BJ (cell line): ENCODE measurements at regions of chr18 and their contacts with region 1.

Region 1: DNA sequence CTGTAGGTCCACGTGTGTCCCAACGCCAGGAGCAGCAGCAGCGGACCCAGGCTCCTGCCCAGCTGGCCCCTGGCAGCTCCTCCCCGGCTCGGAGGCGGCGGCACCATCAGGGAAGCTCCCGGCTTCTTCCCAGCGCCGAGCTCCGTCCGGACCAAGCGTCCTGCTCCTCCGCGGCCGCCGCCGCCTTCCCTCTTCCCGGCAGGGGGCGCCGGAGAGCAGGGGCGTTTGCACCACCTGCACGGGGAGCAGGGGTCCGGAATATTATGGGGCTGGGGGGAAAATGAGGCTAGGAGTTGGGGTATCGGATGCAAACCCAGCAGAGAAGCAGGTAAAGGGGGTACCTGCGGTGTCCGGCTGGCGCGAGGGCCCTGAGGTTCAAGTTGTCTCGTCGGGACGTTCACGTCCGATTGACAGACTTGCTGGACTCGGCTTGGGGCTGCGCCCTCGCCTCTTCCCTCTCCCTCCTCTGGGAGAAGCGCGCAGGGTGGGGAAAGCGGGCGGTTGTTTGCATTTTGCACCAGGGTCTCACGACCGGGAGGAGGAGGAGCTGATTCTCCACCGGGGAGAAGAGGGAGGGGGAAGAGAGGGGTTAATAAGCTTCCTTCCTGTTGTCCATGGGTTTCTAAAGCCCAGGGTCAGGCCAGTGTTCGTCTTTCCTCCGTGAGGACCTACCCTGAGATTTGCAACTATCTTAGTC is at the start of gene CCBE1:
- DNase-seq: no peak
- H3K4me3 ChIP-seq: peak within 1 kb of the TSS; percentile 89
- H3K27me3 ChIP-seq: no peaks in the 10 kb centered on the region
- CTCF ChIP-seq: peak; percentile 99
- polyA plus RNA-seq, gene CCBE1: 35.4 and 51.2 TPM in 2 replicates

Region 2: DNA sequence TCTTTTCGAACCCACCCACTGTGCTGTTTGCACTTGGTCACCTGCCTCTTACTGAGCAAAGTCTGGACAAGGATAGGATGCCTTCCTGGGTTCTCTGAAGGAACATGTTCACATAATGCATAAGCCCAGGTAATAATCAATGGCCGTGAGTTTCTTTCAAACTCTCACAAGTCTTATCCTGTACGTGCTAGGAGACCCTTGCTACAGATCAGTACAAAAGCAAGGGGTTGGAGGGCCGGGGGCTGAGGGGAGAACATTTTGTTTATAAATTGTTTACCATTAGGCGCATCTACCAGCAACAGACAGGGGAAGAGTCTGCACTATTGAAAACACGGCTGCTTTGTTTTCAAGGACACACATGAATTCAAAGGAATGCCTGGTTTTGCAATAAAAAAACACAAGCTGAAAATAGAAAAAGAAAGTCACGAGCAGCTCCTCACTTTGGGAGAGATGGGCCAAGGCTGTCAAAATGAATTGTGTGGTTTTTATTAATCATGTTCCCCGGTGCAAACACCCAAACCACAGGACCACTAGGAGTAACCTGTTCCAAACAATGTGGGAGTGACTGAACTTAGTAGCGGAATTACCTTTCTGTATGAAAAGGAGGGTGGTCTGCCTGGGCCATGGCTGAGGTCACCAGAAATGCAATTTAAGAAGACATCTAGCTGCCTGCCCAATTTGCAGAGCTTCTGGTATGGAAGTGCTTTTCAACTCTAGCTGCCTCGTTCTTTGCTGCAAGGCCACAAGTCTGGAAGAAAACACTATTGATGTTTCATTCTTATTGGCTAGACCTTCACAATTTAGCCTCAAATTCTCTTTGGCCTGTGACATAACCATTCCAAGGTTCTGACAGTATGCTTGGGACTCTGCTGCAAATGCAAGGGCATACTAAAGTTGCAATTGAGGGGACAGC is 73.7 kb before region 1 on chr18:
- CTCF ChIA-PET with region 1: interaction called, 12 read pairs
- POLR2A ChIA-PET with region 1: no interaction called
- DNase-seq: peak; percentile 28
- H3K4me3 ChIP-seq: no peak overlapping the region
- H3K27me3 ChIP-seq: no peaks in the 10 kb centered on the region
- CTCF ChIP-seq: no peak

Region 3: GRCh38 chr18:59672235-59672711 is 25.1 kb before region 1 on chr18:
- CTCF ChIA-PET with region 1: interaction called, 13 read pairs
- POLR2A ChIA-PET with region 1: no interaction called
- DNase-seq: no peak
- H3K4me3 ChIP-seq: no peak overlapping the region
- H3K27me3 ChIP-seq: no peaks in the 10 kb centered on the region
- CTCF ChIP-seq: no peak

Region 4: GRCh38 chr18:59744271-59744721 is 46.9 kb after region 1 on chr18:
- CTCF ChIA-PET with region 1: interaction called, 17 read pairs
- POLR2A ChIA-PET with region 1: no interaction called
- DNase-seq: peak; percentile 97
- H3K4me3 ChIP-seq: no peak overlapping the region
- H3K27me3 ChIP-seq: no peaks in the 10 kb centered on the region
- CTCF ChIP-seq: no peak

Region 5: GRCh38 chr18:59783138-59783537 is 85.8 kb after region 1 on chr18:
- CTCF ChIA-PET with region 1: interaction called, 19 read pairs
- POLR2A ChIA-PET with region 1: no interaction called
- DNase-seq: no peak
- H3K4me3 ChIP-seq: no peak overlapping the region
- H3K27me3 ChIP-seq: no peaks in the 10 kb centered on the region
- CTCF ChIP-seq: peak; percentile 69

Region 6: DNA sequence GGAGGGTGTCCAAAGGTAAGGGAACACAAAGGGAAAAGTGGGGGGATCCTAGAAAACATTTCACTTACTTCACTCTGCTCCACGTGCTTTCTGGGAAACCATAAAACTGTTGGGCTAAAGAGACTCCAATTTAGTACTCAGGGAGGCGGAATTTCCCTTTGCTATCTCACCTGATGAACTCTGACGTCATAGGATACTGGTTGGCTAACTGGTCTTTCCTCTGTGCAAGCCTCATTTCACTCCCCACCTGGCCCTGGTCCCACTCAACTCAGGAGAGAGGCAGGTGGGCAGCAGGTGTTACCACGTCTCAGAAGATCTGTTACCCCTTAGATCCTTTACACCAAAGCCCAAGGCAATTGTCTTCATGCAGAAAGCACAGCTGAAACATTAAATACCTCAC is 150.6 kb after region 1 on chr18:
- CTCF ChIA-PET with region 1: no interaction called
- POLR2A ChIA-PET with region 1: no interaction called
- DNase-seq: no peak
- H3K4me3 ChIP-seq: no peak overlapping the region
- H3K27me3 ChIP-seq: no peaks in the 10 kb centered on the region
- CTCF ChIP-seq: no peak